CD14-positive monocyte (primary cell): ENCODE measurements at regions of chr3 and their contacts with region 1.

Region 1: DNA sequence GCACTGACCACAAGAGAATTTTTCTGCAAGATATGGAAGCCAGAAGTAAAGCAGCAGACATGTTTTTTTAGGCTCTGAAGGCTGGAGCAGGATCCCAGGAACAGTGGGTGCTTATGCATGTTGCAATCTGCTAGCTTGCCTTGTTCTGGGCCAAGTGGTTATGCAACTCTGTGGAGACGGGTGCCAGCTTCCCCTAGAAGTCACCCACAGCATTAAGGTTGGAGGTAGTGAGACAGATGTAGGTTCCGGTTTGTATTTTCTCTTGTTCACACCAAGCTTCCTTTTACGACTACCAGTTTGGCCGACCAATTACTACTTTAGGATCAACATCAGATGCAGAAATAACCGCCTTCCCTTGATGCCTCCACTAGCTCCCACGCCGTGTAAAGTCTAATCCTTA is 11.1 kb downstream of the DPH3 start:
- DNase-seq: peak; percentile 76 to 89 (median 86)
- H3K4me3 ChIP-seq: peak overlapping the region in 1 of 3 experiments; percentile 24
- H3K4me3 Mint-ChIP-seq: peak overlapping the region; percentile 40 to 75
- H3K27ac ChIP-seq: peak overlapping the region; percentile 5 to 80
- H3K27ac Mint-ChIP-seq: peak overlapping the region; percentile 88 to 95 (median 92)
- H3K4me1 ChIP-seq: peaks cover 19% of the 10 kb centered on the region in 2 donors
- H3K4me1 Mint-ChIP-seq: peaks cover 33% of the 10 kb centered on the region
- H3K27me3 ChIP-seq: no peaks in the 10 kb centered on the region
- H3K27me3 Mint-ChIP-seq: no peaks in the 10 kb centered on the region
- CTCF ChIP-seq: no peak

Region 2: DNA sequence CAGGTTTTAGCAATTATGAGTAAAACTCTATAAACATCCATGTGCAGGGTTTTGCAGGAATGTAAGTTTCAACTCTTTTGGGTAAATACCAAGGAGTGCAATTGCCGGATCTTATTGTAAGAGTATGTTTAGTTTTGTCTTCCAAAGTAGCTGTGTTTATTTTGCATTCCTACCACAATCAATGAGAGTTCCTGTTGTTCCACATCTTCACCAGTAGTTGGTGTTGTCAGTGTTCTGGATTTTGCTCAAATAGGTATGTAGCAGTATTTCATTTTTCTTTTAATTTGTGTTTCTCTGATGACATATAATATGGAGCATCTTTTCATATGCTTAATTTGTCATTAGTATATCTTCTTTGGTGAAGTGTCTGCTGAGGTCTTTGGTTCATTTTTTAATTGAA is 264.2 kb before region 1 on chr3:
- intact Hi-C with region 1: no loop called
- DNase-seq: no peak
- H3K4me3 ChIP-seq: no peak overlapping the region
- H3K4me3 Mint-ChIP-seq: no peak overlapping the region
- H3K27ac ChIP-seq: no peak overlapping the region
- H3K27ac Mint-ChIP-seq: no peak overlapping the region
- H3K4me1 ChIP-seq: no peaks in the 10 kb centered on the region
- H3K4me1 Mint-ChIP-seq: no peaks in the 10 kb centered on the region
- H3K27me3 ChIP-seq: no peaks in the 10 kb centered on the region
- H3K27me3 Mint-ChIP-seq: peaks cover 0 to 2% (median 0%) of the 10 kb centered on the region in 3 donors
- CTCF ChIP-seq: no peak

Region 3: GRCh38 chr3:16183601-16184270 is 69.9 kb before region 1 on chr3:
- intact Hi-C with region 1: loop called in 1 of 2 experiments (anchors 5 kb)
- DNase-seq: no peak
- H3K4me3 ChIP-seq: no peak overlapping the region
- H3K4me3 Mint-ChIP-seq: no peak overlapping the region
- H3K27ac ChIP-seq: no peak overlapping the region
- H3K27ac Mint-ChIP-seq: no peak overlapping the region
- H3K4me1 ChIP-seq: peaks cover 11 to 14% of the 10 kb centered on the region in 2 donors
- H3K4me1 Mint-ChIP-seq: peaks cover 17% of the 10 kb centered on the region
- H3K27me3 ChIP-seq: no peaks in the 10 kb centered on the region
- H3K27me3 Mint-ChIP-seq: peaks cover under 1 to 2% (median 2%) of the 10 kb centered on the region in 3 donors
- CTCF ChIP-seq: no peak